Caco-2 (cell line): ENCODE measurements at regions of chr12 and their contacts with region 1.

Region 1: GRCh38 chr12:48001505-48002413 is 2.5 kb downstream of the COL2A1 start:
- DNase-seq: peak; percentile 75
- H3K4me3 ChIP-seq: peak overlapping the region; percentile 50
- H3K4me3 Mint-ChIP-seq: peak overlapping the region; percentile 95
- H3K27ac Mint-ChIP-seq: peak overlapping the region; percentile 92
- H3K4me1 ChIP-seq: peaks cover 23% of the 10 kb centered on the region
- H3K4me1 Mint-ChIP-seq: peaks cover 8% of the 10 kb centered on the region
- H3K27me3 ChIP-seq: no peaks in the 10 kb centered on the region
- H3K27me3 Mint-ChIP-seq: no peaks in the 10 kb centered on the region
- CTCF ChIP-seq: no peak

Region 2: DNA sequence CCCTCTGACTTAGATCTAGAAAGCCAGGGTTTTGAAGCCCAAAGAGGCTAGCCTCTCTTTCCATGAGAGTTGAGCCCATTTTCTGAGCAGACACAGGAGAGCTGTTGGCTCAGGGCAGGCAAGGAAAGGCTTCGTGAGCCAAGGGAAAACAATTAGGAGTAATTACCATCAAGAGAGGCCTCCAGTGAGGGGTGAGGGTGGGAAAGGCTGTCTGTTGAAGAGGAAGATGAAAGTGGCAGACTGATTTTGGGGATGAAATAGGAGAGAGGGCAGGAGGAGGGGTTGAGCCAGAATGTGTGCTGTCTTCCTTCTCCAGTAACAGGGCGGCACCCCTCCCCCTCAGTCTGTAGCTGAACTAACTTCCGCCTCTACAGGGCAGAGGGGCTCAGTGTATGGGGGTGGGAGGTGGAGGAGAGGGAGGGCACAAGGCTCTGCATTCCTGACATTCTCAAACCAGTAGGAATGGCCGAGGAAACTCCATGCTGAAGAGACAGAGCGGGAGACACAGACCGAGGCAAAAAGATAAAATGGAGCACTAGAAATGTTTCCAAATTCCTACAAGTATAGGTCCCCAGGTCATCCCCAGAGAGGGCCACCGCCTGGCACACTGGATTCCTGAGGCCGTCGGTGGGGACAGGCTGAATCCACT is 35.6 kb after region 1 on chr12:
- CTCF ChIA-PET with region 1: interaction called, 3 read pairs
- POLR2A ChIA-PET with region 1: interaction called, 5 read pairs
- intact Hi-C with region 1: loop called (anchors 1 kb)
- DNase-seq: peak; percentile 79 to 86
- H3K4me3 ChIP-seq: no peak overlapping the region
- H3K4me3 Mint-ChIP-seq: peak overlapping the region; percentile 27
- H3K27ac Mint-ChIP-seq: peak overlapping the region; percentile 97
- H3K4me1 ChIP-seq: peaks cover 49% of the 10 kb centered on the region
- H3K4me1 Mint-ChIP-seq: peaks cover 65% of the 10 kb centered on the region
- H3K27me3 ChIP-seq: no peaks in the 10 kb centered on the region
- H3K27me3 Mint-ChIP-seq: no peaks in the 10 kb centered on the region
- CTCF ChIP-seq: no peak

Region 3: DNA sequence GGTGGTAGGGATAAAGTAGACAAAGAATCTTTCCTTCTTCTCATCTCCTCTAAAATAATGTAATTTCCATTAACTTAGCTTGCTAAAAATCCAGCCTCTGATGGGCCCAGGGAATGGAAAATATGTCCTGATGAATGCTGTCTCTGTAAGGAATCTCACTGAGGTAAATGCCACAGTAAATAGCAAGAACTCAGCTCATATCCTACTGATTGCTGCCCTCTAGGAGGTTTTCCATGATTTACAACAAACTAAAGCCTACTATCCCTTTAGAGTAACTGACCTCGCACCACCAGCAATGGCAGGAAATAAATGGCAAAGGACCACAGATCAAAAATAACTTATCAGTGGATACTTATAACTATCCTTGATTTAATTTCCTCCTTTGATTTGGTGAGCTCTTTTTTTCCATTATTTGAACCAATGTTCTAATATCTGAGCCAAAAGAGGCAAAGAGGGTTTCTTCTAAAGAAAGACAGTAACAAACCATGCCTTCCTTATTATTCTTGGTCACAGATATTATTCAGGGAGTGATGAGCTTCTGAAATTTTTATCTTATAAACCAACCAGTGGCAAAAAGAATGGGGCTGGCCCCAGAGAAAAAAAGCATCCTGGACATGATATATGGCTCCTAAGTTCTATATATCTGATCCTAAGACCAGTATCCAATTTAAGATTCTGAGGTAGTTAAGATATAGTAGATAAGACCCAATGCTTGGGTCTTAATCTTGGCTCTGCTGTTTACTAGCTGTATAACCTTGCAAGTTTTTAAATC is 60.4 kb after region 1 on chr12:
- CTCF ChIA-PET with region 1: interaction called, 9 read pairs
- POLR2A ChIA-PET with region 1: no interaction called
- intact Hi-C with region 1: loop called (anchors 1 kb)
- DNase-seq: peak in 1 of 2 experiments; percentile 62
- H3K4me3 ChIP-seq: no peak overlapping the region
- H3K4me3 Mint-ChIP-seq: no peak overlapping the region
- H3K27ac Mint-ChIP-seq: no peak overlapping the region
- H3K4me1 ChIP-seq: no peaks in the 10 kb centered on the region
- H3K4me1 Mint-ChIP-seq: no peaks in the 10 kb centered on the region
- H3K27me3 ChIP-seq: no peaks in the 10 kb centered on the region
- H3K27me3 Mint-ChIP-seq: no peaks in the 10 kb centered on the region
- CTCF ChIP-seq: peak; percentile 49 to 62